ENCODE measurements at regions of chr1 and their contacts with region 1.

Region 1: GRCh38 chr1:183339556-183340167 is 78.5 kb downstream of the NMNAT2 start:
- DNase-seq: no peak
- ATAC-seq: no peak
- H3K4me3 Mint-ChIP-seq: no peak overlapping the region
- H3K27ac Mint-ChIP-seq: no peak overlapping the region
- H3K4me1 Mint-ChIP-seq: peaks cover 12% of the 10 kb centered on the region
- H3K27me3 Mint-ChIP-seq: no peaks in the 10 kb centered on the region
- CTCF ChIP-seq: no peak

Region 2: GRCh38 chr1:183124259-183124658 is 215.4 kb before region 1 on chr1:
- CTCF ChIA-PET with region 1: no interaction called
- POLR2A ChIA-PET with region 1: no interaction called
- DNase-seq: no peak
- ATAC-seq: no peak
- H3K4me3 Mint-ChIP-seq: no peak overlapping the region
- H3K27ac Mint-ChIP-seq: no peak overlapping the region
- H3K4me1 Mint-ChIP-seq: peaks cover 4% of the 10 kb centered on the region
- H3K27me3 Mint-ChIP-seq: no peaks in the 10 kb centered on the region
- CTCF ChIP-seq: no peak

Region 3: DNA sequence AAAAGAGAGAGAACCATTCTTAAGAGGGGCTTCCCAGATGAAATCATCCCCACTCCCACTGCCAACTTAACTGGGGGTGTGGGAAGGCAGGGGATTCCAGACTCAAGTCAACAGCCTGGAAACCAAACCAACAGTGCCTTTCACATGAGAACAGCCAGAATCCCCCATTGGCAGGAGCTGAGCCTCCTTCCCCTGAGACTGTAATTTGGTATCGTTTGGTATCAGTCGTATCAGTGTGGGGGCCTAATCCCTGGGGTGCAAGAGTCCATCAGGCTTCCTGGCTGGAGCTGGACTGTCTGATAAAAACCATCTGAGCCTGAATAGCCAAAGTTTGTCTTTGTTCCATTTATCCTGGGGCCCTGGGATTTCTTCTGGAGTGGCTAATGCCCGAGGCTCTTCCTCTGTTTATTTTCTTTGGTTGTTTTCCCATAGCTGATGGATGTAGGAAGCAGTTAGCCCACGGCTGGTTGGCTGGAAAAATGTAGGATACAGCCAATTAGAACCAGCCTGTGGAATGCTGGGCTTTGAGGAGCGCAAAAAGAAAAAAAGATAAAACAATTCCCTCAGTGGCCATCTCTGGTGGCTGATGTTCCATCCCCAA is 69.0 kb before region 1 on chr1:
- CTCF ChIA-PET with region 1: no interaction called
- POLR2A ChIA-PET with region 1: no interaction called
- DNase-seq: no peak
- ATAC-seq: no peak
- H3K4me3 Mint-ChIP-seq: no peak overlapping the region
- H3K27ac Mint-ChIP-seq: no peak overlapping the region
- H3K4me1 Mint-ChIP-seq: peaks cover 13% of the 10 kb centered on the region
- H3K27me3 Mint-ChIP-seq: no peaks in the 10 kb centered on the region
- CTCF ChIP-seq: no peak

Region 4: GRCh38 chr1:183300395-183300794 is 39.3 kb before region 1 on chr1:
- CTCF ChIA-PET with region 1: no interaction called
- POLR2A ChIA-PET with region 1: no interaction called
- DNase-seq: no peak
- ATAC-seq: no peak
- H3K4me3 Mint-ChIP-seq: no peak overlapping the region
- H3K27ac Mint-ChIP-seq: no peak overlapping the region
- H3K4me1 Mint-ChIP-seq: peaks cover 35% of the 10 kb centered on the region
- H3K27me3 Mint-ChIP-seq: no peaks in the 10 kb centered on the region; the same call in 1 of the 2 replicates
- CTCF ChIP-seq: no peak

Region 5: GRCh38 chr1:183318433-183318832 is 21.2 kb before region 1 on chr1:
- CTCF ChIA-PET with region 1: no interaction called
- POLR2A ChIA-PET with region 1: interaction called, 11 read pairs
- DNase-seq: peak; percentile 45
- ATAC-seq: peak; percentile 76
- H3K4me3 Mint-ChIP-seq: no peak overlapping the region
- H3K27ac Mint-ChIP-seq: no peak overlapping the region
- H3K4me1 Mint-ChIP-seq: peaks cover 55% of the 10 kb centered on the region
- H3K27me3 Mint-ChIP-seq: peaks cover 8% of the 10 kb centered on the region
- CTCF ChIP-seq: no peak